ENCODE measurements at regions of chr14 and their contacts with region 1.

Region 1: GRCh38 chr14:61837336-61838229 is 75.4 kb downstream of the SNAPC1 start:
- DNase-seq: peak; percentile 82
- ATAC-seq: peak; percentile 92

Region 2: GRCh38 chr14:61296719-61297502 is 540.7 kb before region 1 on chr14:
- intact Hi-C with region 1: loop called (anchors 5 kb)
- DNase-seq: no peak
- ATAC-seq: no peak

Region 3: DNA sequence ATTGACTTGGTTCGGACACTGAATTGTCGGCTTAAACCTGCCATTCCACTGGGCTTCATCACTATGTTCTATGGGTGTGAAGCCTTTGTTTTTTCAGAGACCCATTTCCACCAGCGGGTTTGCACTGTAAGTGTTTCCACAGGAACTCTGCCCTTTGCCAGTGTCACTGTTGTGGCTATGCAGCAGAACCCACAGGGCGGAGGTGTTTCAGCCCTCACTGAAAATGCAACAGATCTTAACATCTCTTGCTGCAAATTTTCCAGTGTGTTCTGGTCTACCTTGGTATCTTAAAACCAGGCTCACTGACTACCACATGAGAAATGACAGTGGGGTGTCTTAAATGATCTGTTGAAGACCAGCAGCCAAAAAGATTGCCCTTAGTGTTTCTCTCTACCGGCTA is 495.1 kb before region 1 on chr14:
- intact Hi-C with region 1: no loop called
- DNase-seq: no peak
- ATAC-seq: no peak

Region 4: DNA sequence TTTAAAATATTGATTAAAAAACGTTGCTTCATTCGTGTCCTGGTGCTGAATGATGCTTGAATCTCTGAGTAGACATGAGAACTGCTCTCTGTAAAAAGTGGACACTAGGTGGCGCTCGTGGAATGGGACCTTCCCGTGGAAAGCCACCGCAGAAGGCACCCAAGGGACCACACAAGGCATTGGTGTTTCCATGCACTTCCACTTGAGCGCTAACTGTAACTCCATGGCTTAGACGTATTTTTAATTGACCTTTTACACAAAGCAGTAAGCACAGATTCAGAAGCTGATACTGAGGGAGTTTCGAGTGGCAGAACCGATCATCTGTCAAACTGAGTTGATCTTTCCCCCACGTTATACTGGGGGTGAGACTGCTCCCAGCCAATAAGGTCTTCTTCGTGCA is 380.9 kb before region 1 on chr14:
- intact Hi-C with region 1: loop called (anchors 2 kb)
- DNase-seq: peak; percentile 87
- ATAC-seq: peak; percentile 75

Measured in Right ventricle myocardium inferior (tissue), 1 donor.